H1 (cell line): ENCODE measurements at regions of chr11 and their contacts with region 1.

Region 1: GRCh38 chr11:114738954-114739353 is 60.6 kb downstream of the NXPE2 start:
- DNase-seq: peak; percentile 13 to 64
- H3K4me3 ChIP-seq: no peak overlapping the region
- H3K27ac ChIP-seq: no peak overlapping the region
- H3K4me1 ChIP-seq: no peaks in the 10 kb centered on the region
- H3K27me3 ChIP-seq: no peaks in the 10 kb centered on the region
- CTCF ChIP-seq: peak; percentile 44 to 84 (median 67)
- EP300 ChIP-seq: no peak
- POLR2A ChIP-seq: no peak
- RAD21 ChIP-seq: peak; percentile 84 to 86

Region 2: DNA sequence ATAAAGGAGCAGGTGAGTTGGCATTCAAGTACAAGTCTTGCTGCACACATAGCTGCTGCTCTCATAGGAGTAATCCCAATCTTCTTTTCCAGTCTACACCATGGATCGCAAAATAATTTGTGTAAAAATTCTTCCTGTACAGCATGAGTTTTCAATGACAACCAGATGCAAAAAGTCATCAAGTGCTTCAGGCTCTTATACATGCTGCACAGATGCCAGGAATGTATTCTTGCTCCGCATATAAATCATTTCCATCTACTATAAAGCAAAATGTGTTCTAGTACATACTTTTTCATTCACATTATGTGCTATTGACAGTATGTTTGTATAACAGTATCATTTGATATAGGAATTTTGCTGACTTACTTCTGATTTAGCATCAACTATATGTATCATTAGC is 25.2 kb before region 1 on chr11:
- CTCF ChIA-PET with region 1: interaction called, 12 read pairs
- POLR2A ChIA-PET with region 1: no interaction called
- DNase-seq: no peak
- H3K4me3 ChIP-seq: no peak overlapping the region
- H3K27ac ChIP-seq: no peak overlapping the region
- H3K4me1 ChIP-seq: no peaks in the 10 kb centered on the region
- H3K27me3 ChIP-seq: no peaks in the 10 kb centered on the region
- CTCF ChIP-seq: no peak
- EP300 ChIP-seq: no peak
- POLR2A ChIP-seq: no peak
- RAD21 ChIP-seq: no peak